ENCODE measurements at regions of chr12 and their contacts with region 1.

Region 1: DNA sequence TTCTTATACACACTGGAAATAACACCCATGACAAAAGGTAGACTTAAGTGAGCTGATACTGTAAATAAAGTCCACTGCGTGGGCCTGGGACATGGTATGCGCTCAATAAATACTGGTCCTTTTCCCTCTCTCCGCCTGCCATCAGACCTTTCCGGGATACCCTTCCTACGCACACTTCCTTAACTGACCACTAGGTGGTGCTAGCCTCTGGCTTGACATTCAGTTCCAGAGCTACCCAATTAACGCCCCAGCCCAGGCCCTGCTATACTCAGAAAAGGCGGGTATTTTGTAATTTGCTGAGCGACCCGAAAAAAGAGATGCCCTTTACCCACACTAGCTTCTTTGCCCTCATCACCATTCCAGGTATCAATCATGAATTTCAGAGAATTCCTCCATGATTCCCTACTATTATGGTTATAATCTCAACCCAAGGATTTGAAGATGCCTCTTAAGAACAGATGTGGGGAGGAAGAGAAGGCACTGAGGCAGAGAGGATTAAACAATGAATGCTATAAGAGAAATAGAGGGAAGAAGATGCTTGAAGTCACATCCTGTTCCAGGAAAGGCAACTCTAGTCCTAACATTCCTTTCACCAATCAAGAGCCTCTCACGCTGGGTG is 3.9 kb upstream of the LRP1 start:
- DNase-seq: peak; percentile 56
- ATAC-seq: peak; percentile 56
- H3K4me3 ChIP-seq: no peak overlapping the region
- H3K27ac ChIP-seq: no peak overlapping the region
- H3K4me1 ChIP-seq: peaks cover 9 to 27% of the 10 kb centered on the region in 2 experiments
- H3K27me3 ChIP-seq: no peaks in the 10 kb centered on the region
- CTCF ChIP-seq: peak; percentile 88 to 94 (median 92)
- POLR2A ChIP-seq: no peak
- RAD21 ChIP-seq: peak; percentile 84

Region 2: DNA sequence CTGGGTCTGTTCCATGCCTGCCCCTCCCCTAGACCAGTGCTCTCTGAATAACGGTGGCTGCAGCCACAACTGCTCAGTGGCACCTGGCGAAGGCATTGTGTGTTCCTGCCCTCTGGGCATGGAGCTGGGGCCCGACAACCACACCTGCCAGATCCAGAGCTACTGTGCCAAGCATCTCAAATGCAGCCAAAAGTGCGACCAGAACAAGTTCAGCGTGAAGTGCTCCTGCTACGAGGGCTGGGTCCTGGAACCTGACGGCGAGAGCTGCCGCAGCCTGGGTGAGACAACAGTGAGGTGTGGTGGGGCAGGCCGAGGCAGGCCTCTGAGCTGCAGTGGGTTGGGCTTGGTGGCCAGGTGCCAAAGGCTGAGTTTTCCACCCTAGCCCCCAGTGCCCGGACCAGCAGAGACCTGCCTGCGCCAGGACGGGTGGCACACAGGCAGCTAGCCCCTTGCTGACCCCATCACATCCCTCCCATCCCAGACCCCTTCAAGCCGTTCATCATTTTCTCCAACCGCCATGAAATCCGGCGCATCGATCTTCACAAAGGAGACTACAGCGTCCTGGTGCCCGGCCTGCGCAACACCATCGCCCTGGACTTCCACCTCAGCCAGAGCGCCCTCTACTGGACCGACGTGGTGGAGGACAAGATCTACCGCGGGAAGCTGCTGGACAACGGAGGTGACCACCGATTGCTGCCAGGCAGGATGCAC is 51.2 kb after region 1 on chr12:
- CTCF ChIA-PET with region 1: interaction called, 40 read pairs
- POLR2A ChIA-PET with region 1: interaction called, 7 read pairs
- RAD21 ChIA-PET with region 1: interaction called, 4 to 7 read pairs
- intact Hi-C with region 1: loop called (anchors 1 kb)
- DNase-seq: peak; percentile 73
- ATAC-seq: peak; percentile 90
- H3K4me3 ChIP-seq: peak overlapping the region in 1 of 2 experiments; percentile 29; a peak in 2 of 4 replicates
- H3K27ac ChIP-seq: peak overlapping the region; percentile 61
- H3K4me1 ChIP-seq: peaks cover 18 to 28% of the 10 kb centered on the region in 2 experiments
- H3K27me3 ChIP-seq: no peaks in the 10 kb centered on the region
- CTCF ChIP-seq: peak; percentile 83 to 87 (median 86)
- POLR2A ChIP-seq: no peak
- RAD21 ChIP-seq: peak; percentile 75

Region 3: DNA sequence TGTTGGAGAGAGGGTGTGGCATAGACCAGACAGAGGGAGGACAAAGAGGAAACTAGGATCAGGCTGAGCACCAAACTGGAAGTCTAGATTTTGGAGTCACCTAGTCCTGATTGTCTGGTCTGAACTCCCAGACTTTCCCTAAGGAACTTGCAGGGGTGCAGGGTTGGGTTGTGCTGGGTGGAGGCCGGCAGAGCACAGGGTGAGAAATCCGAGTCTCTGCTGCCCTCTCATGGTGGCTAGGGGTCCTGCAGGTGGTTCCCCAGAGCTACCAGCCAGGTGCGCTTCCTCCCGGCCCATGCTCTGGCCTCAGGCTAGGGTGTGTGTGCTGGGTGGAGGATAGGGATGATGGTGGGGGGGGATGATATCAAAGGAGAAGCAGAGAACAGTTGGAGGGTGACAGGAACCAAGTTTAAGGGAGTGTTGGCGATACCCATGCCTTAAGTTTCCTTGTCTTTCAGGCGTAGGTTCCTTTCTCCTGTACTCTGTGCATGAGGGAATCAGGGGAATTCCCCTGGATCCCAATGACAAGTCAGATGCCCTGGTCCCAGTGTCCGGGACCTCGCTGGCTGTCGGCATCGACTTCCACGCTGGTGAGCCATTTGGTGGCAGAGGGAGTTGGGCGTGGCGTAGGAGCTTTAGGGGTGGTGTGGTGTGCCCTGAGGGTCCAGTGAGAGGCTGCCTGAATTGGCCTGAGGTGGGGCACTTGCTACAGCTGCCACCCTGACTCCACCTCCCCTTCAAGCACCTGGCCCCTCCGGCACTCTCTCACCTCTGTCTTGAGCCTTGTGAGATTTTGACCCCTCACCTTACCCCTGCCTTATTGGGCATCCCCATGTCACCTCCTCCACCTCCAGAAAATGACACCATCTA is 58.8 kb after region 1 on chr12:
- CTCF ChIA-PET with region 1: interaction called, 25 read pairs
- POLR2A ChIA-PET with region 1: interaction called, 4 read pairs
- RAD21 ChIA-PET with region 1: no interaction called
- intact Hi-C with region 1: loop called (anchors 2 kb)
- DNase-seq: peak; percentile 31
- ATAC-seq: peak; percentile 99
- H3K4me3 ChIP-seq: no peak overlapping the region
- H3K27ac ChIP-seq: no peak overlapping the region
- H3K4me1 ChIP-seq: peaks cover 0 to 8% of the 10 kb centered on the region in 2 experiments; a peak in 3 of 4 replicates
- H3K27me3 ChIP-seq: no peaks in the 10 kb centered on the region
- CTCF ChIP-seq: peak; percentile 91 to 93 (median 93)
- POLR2A ChIP-seq: no peak
- RAD21 ChIP-seq: peak; percentile 93

Measured in HCT116 (cell line).